Motor neuron (in vitro differentiated cells): ENCODE measurements at regions of chr6 and their contacts with region 1.

Region 1: DNA sequence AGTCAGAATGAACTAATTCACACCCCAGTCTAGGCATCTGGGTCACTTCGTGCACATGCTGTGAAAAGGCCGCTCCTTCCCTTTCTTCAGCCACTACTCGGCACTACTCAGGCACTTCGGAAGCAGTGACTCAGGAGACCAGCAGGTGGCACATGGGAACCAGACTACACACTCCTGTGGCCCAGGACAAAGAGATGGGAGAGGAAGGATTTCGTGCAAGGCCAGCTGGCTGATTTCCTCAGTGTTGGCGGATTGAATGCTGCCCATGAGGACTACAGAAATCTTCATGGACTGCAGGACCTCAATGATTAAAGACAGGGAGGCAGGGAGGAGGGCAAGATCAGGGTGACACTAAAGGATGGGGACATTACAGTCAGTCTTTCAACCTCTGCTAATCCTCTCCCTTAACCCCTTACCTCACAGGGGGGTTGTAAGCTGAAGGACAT is 117.8 kb upstream of the SPACA1 start:
- ATAC-seq: peak; percentile 100
- H3K4me3 ChIP-seq: no peak overlapping the region
- H3K27ac ChIP-seq: peak overlapping the region in 1 of 2 donors; percentile 72
- H3K4me1 ChIP-seq: peaks cover 4 to 27% of the 10 kb centered on the region in 2 donors

Region 2: DNA sequence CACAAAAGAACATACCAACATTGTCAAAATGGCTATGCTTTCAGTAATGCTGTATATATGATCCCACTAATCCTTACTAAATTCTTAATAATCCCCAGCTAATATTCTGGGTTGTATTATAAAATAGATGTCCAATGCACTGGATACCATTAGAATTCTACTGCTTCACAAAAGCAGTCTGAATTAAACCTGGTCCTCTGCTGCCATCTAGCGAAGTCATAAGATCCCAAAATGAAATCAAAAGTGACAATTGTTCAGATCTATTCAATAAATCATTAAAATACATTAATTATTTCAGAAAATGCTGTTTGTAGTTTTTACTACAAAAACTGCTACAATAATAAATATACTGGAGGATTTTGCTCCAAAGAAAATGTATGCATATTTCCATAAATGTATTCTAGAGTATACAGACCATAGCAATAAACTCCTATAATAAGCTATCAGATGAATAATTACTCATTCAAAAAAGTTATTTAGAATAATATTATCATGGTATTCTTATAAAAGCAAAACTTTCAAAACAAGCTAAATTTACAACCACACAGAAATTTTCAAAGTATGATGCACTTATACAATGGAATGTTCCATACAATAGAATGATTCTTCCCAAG is 941.0 kb after region 1 on chr6:
- in situ Hi-C with region 1: loop called in 1 of 9 experiments (anchors 25 kb)
- ATAC-seq: peak in 5 of 8 experiments; percentile 19 to 45 (median 33)
- H3K4me3 ChIP-seq: no peak overlapping the region
- H3K27ac ChIP-seq: no peak overlapping the region
- H3K4me1 ChIP-seq: no peaks in the 10 kb centered on the region